BJ (cell line): ENCODE measurements at regions of chr12 and their contacts with region 1.

Region 1: GRCh38 chr12:105611340-105611739 is 280.8 kb downstream of the C12orf75 start:
- DNase-seq: no peak
- H3K4me3 ChIP-seq: no peak overlapping the region
- H3K27me3 ChIP-seq: no peaks in the 10 kb centered on the region
- CTCF ChIP-seq: no peak

Region 2: GRCh38 chr12:105600911-105601545 is 10.3 kb before region 1 on chr12:
- CTCF ChIA-PET with region 1: interaction called, 3 read pairs
- POLR2A ChIA-PET with region 1: interaction called, 10 read pairs
- DNase-seq: peak; percentile 21
- H3K4me3 ChIP-seq: no peak overlapping the region
- H3K27me3 ChIP-seq: no peaks in the 10 kb centered on the region
- CTCF ChIP-seq: no peak